Body of pancreas (tissue), 4 donors: ENCODE measurements at regions of chr6 and their contacts with region 1.

Region 1: GRCh38 chr6:122520179-122520578 is 48.6 kb upstream of the SERINC1 start:
- DNase-seq: no peak
- ATAC-seq: no peak
- H3K4me3 ChIP-seq: no peak overlapping the region
- H3K27ac ChIP-seq: no peak overlapping the region
- H3K4me1 ChIP-seq: no peaks in the 10 kb centered on the region
- H3K27me3 ChIP-seq: no peaks in the 10 kb centered on the region
- CTCF ChIP-seq: no peak
- POLR2A ChIP-seq: no peak

Region 2: DNA sequence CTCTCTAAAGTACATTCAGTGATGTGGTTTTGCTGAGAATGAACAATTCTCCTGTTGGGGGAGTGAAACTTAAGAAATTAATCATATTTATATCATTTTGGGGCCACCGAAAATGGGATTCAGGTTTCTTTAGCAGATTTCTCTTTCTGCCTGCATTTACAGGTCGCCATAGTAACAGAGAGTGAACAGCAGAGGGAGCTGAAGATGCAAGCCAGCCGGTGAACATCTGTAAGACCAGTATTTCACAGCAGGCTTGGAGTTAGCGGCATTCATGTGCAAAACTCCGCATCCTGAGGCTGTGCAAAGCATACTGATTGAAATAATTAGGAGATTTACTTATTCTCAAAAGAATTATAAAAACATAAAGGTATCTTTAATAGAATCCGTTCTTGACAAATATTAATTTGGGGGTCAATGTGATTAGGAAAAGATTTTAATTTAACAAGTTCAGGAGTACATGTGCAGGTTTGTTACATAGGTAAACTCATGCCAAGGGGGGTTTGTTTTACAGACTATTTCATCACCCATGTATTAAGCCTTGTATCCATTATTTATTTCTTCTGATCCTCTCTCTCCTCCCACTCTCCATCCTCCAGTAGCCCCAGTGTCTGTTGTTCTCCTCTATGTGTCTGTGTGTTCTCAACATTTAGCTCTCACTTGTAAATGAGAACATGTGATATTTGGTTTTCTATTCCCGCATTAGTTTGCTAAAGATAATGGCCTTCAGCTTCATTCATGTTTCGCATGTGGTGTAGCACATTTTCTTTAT is 138.5 kb before region 1 on chr6:
- intact Hi-C with region 1: loop called (anchors 10 kb)
- DNase-seq: peak; percentile 54 to 71 (median 70)
- ATAC-seq: peak; percentile 83
- H3K4me3 ChIP-seq: no peak overlapping the region
- H3K27ac ChIP-seq: no peak overlapping the region
- H3K4me1 ChIP-seq: no peaks in the 10 kb centered on the region
- H3K27me3 ChIP-seq: no peaks in the 10 kb centered on the region
- CTCF ChIP-seq: peak; percentile 55 to 76 (median 67)
- POLR2A ChIP-seq: no peak

Region 3: DNA sequence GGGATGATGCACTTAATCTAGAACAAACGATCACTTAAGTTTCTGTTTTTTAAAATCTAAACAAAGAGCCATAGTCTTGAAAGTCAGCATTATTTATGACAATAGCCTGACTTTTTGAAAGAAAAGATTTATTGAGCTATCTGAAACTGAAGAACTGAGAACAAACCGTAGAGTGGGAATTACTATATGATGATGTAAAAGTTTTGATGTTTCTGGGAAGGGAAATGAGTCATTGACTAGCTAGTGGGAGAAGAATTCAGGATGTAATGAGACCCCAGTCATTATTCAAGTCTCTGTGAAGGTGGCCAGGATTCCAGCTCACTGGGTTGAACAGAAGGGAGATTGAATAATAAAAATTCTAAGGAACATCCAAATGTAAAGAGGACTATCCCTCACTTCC is 175.9 kb after region 1 on chr6:
- intact Hi-C with region 1: no loop called
- DNase-seq: no peak
- ATAC-seq: no peak
- H3K4me3 ChIP-seq: no peak overlapping the region
- H3K27ac ChIP-seq: no peak overlapping the region
- H3K4me1 ChIP-seq: no peaks in the 10 kb centered on the region
- H3K27me3 ChIP-seq: no peaks in the 10 kb centered on the region
- CTCF ChIP-seq: no peak
- POLR2A ChIP-seq: no peak